Sigmoid colon (tissue), 7 donors: ENCODE measurements at regions of chr4 and their contacts with region 1.

Region 1: DNA sequence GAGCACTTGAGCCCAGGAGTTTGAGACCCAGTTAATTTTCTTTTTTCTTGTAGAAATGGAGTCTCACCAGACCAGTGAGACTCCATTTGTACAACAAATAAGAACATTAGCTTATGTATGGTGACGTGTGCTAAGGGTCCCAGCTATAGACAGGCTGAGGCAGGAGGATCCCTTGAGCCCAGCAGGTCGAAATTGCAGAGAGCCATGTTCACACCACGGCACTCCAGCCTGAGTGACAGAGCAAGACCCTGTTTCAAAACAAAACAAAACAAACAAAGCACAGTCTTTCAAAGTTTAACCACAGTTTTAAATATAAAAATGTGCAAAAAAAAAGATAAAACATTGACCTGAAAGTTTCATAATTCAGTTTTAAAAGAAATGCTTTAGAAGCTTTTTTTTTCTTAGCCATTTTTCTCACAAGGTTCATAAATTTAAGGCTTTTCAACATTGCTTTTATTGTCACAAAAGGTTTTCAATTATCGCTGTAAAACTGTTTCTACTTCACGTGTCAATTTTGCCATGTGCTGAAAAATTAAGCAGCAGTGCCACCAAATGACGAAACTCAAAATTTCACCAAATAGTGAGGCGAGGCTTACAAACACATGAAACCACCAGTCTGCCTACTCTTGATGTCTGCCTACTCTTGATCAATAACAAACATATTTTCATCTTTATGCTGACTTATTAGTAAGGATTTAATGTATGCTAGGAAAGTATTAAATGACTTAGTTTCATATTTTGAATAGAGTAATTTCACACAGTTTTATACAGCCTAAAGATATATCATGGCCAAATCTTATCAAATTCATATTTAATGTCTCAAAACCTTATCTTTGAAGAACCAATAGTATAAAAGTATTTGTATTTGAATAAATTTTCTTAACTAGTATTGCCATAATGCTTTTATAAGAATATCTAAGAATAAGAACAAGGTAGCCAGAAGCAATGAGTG is 126.3 kb downstream of the NEK1 start:
- DNase-seq: no peak
- H3K4me3 ChIP-seq: no peak overlapping the region
- H3K27ac ChIP-seq: no peak overlapping the region
- H3K4me1 ChIP-seq: no peaks in the 10 kb centered on the region
- H3K27me3 ChIP-seq: no peaks in the 10 kb centered on the region
- CTCF ChIP-seq: peak in 3 of 4 experiments; percentile 5 to 42 (median 19)
- EP300 ChIP-seq: no peak
- POLR2A ChIP-seq: no peak

Region 2: GRCh38 chr4:168955674-168956073 is 530.4 kb before region 1 on chr4:
- intact Hi-C with region 1: no loop called
- DNase-seq: no peak
- H3K4me3 ChIP-seq: no peak overlapping the region
- H3K27ac ChIP-seq: no peak overlapping the region
- H3K4me1 ChIP-seq: peaks cover 0 to 3% (median 0%) of the 10 kb centered on the region in 4 donors
- H3K27me3 ChIP-seq: no peaks in the 10 kb centered on the region
- CTCF ChIP-seq: no peak
- EP300 ChIP-seq: no peak
- POLR2A ChIP-seq: no peak

Region 3: DNA sequence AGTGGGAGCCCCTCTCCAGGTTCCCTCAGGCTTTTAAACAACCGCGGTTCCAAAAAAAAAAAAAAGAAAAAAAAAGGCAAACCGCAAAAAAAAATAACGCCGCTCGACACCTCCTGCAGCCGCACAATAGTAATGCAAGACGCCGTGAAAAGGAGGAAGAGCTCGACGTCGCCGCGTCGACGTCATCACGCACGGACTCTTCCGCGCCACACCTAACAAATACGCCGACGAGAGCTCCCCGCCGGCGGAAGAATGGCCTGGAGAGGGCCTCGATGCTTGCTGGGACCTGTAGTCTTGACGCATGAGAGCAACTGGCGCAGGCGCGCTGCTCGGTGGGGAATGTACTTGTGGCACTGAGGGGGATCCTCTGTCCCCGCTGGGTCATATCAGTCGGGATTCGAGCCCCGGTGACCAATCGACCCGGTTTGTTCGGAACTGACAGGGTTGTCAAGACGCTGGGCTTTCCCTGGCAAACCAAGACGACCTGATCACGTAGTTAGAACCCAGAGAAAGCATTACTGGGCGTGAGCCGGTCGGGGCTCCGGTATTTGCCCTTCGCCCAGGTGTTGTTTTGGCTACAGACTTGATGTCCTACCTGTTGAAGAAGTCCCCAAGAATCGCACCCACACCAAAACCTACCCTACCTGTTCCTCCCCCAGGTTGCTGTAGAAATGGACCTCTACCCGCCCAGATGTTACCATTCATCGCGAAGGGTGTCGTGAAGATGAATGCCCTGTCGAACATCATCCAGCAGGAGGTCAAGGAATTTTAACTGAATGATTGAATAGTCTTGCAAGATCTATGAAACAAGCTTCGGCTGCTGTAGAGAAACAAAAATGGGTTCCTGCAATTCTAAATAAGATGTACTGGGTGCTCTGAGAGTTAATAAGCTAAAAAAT is 475.7 kb before region 1 on chr4 and contains the start of gene CBR4:
- intact Hi-C with region 1: loop called (anchors 5 kb)
- DNase-seq: peak; percentile 99
- H3K4me3 ChIP-seq: peak within 1 kb of the TSS; percentile 64 to 72 (median 69)
- H3K27ac ChIP-seq: peak within 1 kb of the TSS; percentile 92 to 96 (median 93)
- H3K4me1 ChIP-seq: peaks cover 0 to 31% (median 18%) of the 10 kb centered on the region in 4 donors
- H3K27me3 ChIP-seq: no peaks in the 10 kb centered on the region
- CTCF ChIP-seq: peak; percentile 8 to 52 (median 17)
- EP300 ChIP-seq: peak in 1 of 4 donors; percentile 22
- POLR2A ChIP-seq: peak; percentile 78 to 81
- total RNA-seq, gene CBR4: 13.4 to 23.9 (median 20.6) TPM